A673 (cell line): ENCODE measurements at regions of chr1 and their contacts with region 1.

Region 1: GRCh38 chr1:61453111-61453961 is 271.6 kb downstream of the TM2D1 start:
- DNase-seq: peak; percentile 92
- H3K4me3 ChIP-seq: no peak overlapping the region
- H3K27ac ChIP-seq: peak overlapping the region; percentile 62
- H3K4me1 ChIP-seq: peaks cover 37% of the 10 kb centered on the region
- H3K27me3 ChIP-seq: no peaks in the 10 kb centered on the region
- CTCF ChIP-seq: peak; percentile 90

Region 2: GRCh38 chr1:60969971-60970509 is 483.3 kb before region 1 on chr1:
- CTCF ChIA-PET with region 1: no interaction called
- POLR2A ChIA-PET with region 1: no interaction called
- intact Hi-C with region 1: loop called (anchors 5 kb)
- DNase-seq: peak; percentile 76
- H3K4me3 ChIP-seq: no peak overlapping the region
- H3K27ac ChIP-seq: no peak overlapping the region
- H3K4me1 ChIP-seq: peaks cover 8% of the 10 kb centered on the region
- H3K27me3 ChIP-seq: no peaks in the 10 kb centered on the region
- CTCF ChIP-seq: peak; percentile 69

Region 3: GRCh38 chr1:61049850-61050540 is 403.3 kb before region 1 on chr1:
- CTCF ChIA-PET with region 1: interaction called, 4 read pairs
- POLR2A ChIA-PET with region 1: no interaction called
- intact Hi-C with region 1: loop called (anchors 5 kb)
- DNase-seq: peak; percentile 93
- H3K4me3 ChIP-seq: peak overlapping the region; percentile 82
- H3K27ac ChIP-seq: peak overlapping the region; percentile 86
- H3K4me1 ChIP-seq: peaks cover 8% of the 10 kb centered on the region
- H3K27me3 ChIP-seq: no peaks in the 10 kb centered on the region
- CTCF ChIP-seq: peak; percentile 97

Region 4: GRCh38 chr1:61343734-61344420 is 109.5 kb before region 1 on chr1:
- CTCF ChIA-PET with region 1: interaction called, 4 read pairs
- POLR2A ChIA-PET with region 1: no interaction called
- intact Hi-C with region 1: loop called (anchors 2 kb)
- DNase-seq: peak; percentile 80
- H3K4me3 ChIP-seq: no peak overlapping the region
- H3K27ac ChIP-seq: peak overlapping the region; percentile 68
- H3K4me1 ChIP-seq: peaks cover 34% of the 10 kb centered on the region
- H3K27me3 ChIP-seq: no peaks in the 10 kb centered on the region
- CTCF ChIP-seq: no peak

Region 5: DNA sequence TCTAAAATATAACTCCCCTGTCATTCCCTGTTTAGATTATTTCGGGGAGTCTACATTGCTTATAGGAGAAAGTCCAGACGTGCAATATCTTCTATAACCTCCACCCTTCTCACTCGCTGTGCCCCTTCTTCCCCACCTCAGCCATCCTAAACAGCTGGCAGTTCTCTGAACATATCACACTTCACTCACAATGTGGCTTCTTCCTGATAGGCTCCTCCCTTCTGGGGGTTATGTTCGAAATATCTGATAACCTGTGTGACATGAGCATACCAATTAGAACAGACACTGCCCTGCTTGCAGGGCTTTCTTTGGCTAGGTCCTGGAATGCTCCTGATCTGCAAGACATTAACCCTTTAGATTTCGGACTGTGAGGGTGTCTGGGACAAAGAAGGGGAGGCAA is 96.3 kb before region 1 on chr1:
- CTCF ChIA-PET with region 1: no interaction called
- POLR2A ChIA-PET with region 1: no interaction called
- intact Hi-C with region 1: loop called (anchors 5 kb)
- DNase-seq: no peak
- H3K4me3 ChIP-seq: no peak overlapping the region
- H3K27ac ChIP-seq: no peak overlapping the region
- H3K4me1 ChIP-seq: peaks cover 15% of the 10 kb centered on the region
- H3K27me3 ChIP-seq: no peaks in the 10 kb centered on the region
- CTCF ChIP-seq: no peak

Region 6: DNA sequence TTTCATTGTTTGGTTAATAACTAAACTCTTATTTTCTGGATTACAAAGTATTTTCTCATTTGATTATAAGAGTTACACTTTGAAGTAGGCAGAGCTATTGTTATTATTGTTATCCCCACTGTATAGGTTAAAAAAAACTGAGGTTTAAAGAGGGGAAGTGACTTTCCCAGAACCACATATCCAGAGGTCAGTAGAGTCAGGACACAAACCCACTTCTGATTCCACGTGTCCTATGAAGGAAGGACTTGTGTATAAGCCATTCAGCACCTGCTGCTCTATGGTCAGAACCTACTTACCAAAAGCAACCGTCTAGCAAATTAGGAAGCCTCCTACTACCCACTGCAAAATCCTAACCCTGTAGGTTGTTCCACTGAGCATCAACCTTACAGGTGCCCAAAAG is 19.7 kb before region 1 on chr1:
- CTCF ChIA-PET with region 1: interaction called, 12 read pairs
- POLR2A ChIA-PET with region 1: no interaction called
- intact Hi-C with region 1: no loop called
- DNase-seq: no peak
- H3K4me3 ChIP-seq: no peak overlapping the region
- H3K27ac ChIP-seq: no peak overlapping the region
- H3K4me1 ChIP-seq: peaks cover 4% of the 10 kb centered on the region
- H3K27me3 ChIP-seq: no peaks in the 10 kb centered on the region
- CTCF ChIP-seq: no peak